ENCODE measurements at regions of chr12 and their contacts with region 1.

Region 1: GRCh38 chr12:69879041-69879960 is 54.3 kb downstream of the MYRFL start:
- DNase-seq: peak; percentile 57 to 67
- H3K4me3 ChIP-seq: no peak overlapping the region
- H3K27ac ChIP-seq: no peak overlapping the region
- H3K4me1 ChIP-seq: no peaks in the 10 kb centered on the region
- H3K27me3 ChIP-seq: no peaks in the 10 kb centered on the region
- CTCF ChIP-seq: peak; percentile 92

Region 2: DNA sequence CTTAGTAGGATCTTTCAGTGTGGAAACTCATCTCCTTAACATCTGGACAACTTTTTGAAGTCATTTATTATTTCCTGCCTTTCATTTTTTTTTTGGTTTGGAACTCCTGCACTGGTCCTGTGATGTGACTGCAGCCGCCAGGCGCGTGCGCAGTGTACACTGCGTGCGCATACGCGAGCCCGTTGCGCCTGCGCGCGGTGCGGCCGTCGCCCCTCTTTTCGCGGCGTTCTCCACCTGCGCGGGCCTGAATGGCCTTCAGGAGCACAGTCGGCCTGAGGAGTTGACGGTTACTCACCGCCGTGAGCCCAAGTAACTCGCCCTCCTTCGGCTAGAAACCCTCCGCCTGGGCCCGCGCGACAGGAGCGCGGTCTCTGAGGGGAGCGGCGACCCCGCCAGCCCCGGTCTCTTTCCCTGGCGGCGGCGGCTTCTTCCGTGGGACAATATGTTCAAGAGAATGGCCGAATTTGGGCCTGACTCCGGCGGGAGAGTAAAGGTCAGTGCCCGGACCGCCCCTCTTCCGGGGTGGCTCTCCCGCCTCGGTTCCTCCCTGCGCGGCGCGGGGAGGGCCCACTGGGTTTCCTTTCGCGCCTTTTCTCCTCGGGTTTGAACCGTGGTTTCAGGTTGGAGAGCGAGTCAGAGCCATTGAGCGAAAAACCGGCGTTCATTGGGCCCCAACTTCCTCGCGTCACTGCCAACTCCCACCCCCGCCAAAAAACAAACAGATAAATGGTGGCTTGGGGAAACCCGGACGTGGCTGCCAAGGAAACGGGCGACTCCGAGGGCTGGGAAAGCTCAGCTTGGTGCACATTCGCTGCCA is 519.6 kb before region 1 on chr12 and contains the start of gene YEATS4:
- CTCF ChIA-PET with region 1: no interaction called
- POLR2A ChIA-PET with region 1: no interaction called
- intact Hi-C with region 1: loop called (anchors 5 kb)
- DNase-seq: peak; percentile 87 to 88
- H3K4me3 ChIP-seq: peak within 1 kb of the TSS; percentile 63
- H3K27ac ChIP-seq: peak within 1 kb of the TSS; percentile 82
- H3K4me1 ChIP-seq: peaks cover 16% of the 10 kb centered on the region
- H3K27me3 ChIP-seq: no peaks in the 10 kb centered on the region
- CTCF ChIP-seq: no peak
- total RNA-seq, gene YEATS4: 23.5 and 30.5 TPM in 2 replicates

Region 3: GRCh38 chr12:70106347-70106746 is 227.0 kb after region 1 on chr12:
- CTCF ChIA-PET with region 1: no interaction called
- POLR2A ChIA-PET with region 1: no interaction called
- intact Hi-C with region 1: no loop called
- DNase-seq: no peak
- H3K4me3 ChIP-seq: no peak overlapping the region
- H3K27ac ChIP-seq: no peak overlapping the region
- H3K4me1 ChIP-seq: no peaks in the 10 kb centered on the region
- H3K27me3 ChIP-seq: no peaks in the 10 kb centered on the region
- CTCF ChIP-seq: no peak

Region 4: GRCh38 chr12:70251226-70251625 is 371.9 kb after region 1 on chr12:
- CTCF ChIA-PET with region 1: interaction called, 17 read pairs
- POLR2A ChIA-PET with region 1: no interaction called
- intact Hi-C with region 1: no loop called
- DNase-seq: no peak
- H3K4me3 ChIP-seq: no peak overlapping the region
- H3K27ac ChIP-seq: no peak overlapping the region
- H3K4me1 ChIP-seq: 0 out of 2 replicates have a peak, but pooled peaks cover 5% of the 10 kb centered on the region
- H3K27me3 ChIP-seq: no peaks in the 10 kb centered on the region
- CTCF ChIP-seq: no peak

Region 5: GRCh38 chr12:70733385-70733784 is 854.1 kb after region 1 on chr12:
- CTCF ChIA-PET with region 1: no interaction called
- POLR2A ChIA-PET with region 1: no interaction called
- intact Hi-C with region 1: loop called (anchors 1 kb)
- DNase-seq: peak; percentile 30 to 43
- H3K4me3 ChIP-seq: no peak overlapping the region
- H3K27ac ChIP-seq: no peak overlapping the region
- H3K4me1 ChIP-seq: no peaks in the 10 kb centered on the region
- H3K27me3 ChIP-seq: no peaks in the 10 kb centered on the region
- CTCF ChIP-seq: peak; percentile 85

Region 6: GRCh38 chr12:71014180-71014785 is 1135.0 kb after region 1 on chr12:
- CTCF ChIA-PET with region 1: no interaction called
- POLR2A ChIA-PET with region 1: no interaction called
- intact Hi-C with region 1: loop called (anchors 1 kb)
- DNase-seq: peak; percentile 2 to 37
- H3K4me3 ChIP-seq: peak overlapping the region; percentile 27; the same call in 1 of the 2 replicates
- H3K27ac ChIP-seq: no peak overlapping the region
- H3K4me1 ChIP-seq: 0 out of 2 replicates have a peak, but pooled peaks cover 5% of the 10 kb centered on the region
- H3K27me3 ChIP-seq: no peaks in the 10 kb centered on the region
- CTCF ChIP-seq: peak; percentile 79